Activated CD4-positive, alpha-beta T cell treated with anti-CD3 and anti-CD28 coated beads for 36 hours (primary cell): ENCODE measurements at regions of chr6 and their contacts with region 1.

Region 1: GRCh38 chr6:3118353-3119039 is at the start of gene BPHL:
- DNase-seq: peak; percentile 100
- ATAC-seq: peak; percentile 90
- H3K4me3 Mint-ChIP-seq: peak within 1 kb of the TSS; percentile 76
- H3K27ac Mint-ChIP-seq: peak within 1 kb of the TSS; percentile 60
- H3K4me1 Mint-ChIP-seq: peaks cover 22% of the 10 kb centered on the region
- H3K27me3 Mint-ChIP-seq: no peaks in the 10 kb centered on the region
- total RNA-seq, gene BPHL: 15.8 to 16.7 TPM

Region 2: DNA sequence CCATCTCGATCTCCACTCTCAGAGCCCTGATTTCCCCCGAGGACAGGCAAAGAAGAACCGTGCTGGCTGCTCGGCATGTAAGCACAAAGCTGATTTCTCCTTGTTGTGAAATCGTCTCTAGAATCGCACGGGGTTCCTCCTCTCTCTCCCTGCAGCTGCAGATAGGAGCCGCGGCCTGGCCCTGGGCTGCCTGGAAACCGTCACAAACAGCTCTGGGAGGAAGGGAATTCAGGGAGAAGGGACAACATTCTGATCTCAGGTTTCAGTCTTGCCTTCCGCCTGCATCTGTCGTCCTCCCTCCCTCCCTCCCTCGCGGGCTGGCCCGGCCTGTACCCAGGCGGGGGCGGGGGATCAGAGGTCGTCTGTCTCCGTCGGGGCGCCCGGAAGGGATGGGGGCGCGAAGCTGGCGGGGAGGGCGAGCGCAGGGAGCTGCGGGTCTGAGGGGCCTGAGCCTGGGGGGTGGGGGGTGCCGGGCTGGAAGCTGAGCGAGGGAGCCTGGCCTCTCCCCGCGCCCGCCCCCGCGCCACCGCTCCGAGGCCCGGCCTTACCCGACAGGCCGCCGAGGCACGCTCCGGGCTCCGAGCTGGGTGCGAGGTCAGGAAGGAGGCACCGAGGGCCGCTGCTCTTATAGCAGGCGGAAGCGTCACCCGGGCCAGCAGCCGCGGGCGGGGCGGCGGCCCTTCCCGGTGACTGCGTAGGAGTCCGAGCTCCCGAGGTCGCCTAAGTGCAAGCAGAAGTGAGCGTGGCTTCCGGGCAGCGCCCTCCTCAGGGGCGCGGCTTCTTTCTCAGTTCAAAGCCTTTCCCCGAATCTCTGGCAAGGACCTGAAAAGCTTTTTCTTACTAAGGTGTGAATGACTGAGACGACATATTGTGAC is 277.0 kb before region 1 on chr6 and contains the start of gene SERPINB1:
- CTCF ChIA-PET with region 1: no interaction called
- POLR2A ChIA-PET with region 1: no interaction called
- intact Hi-C with region 1: loop called in 1 of 2 experiments (anchors 1 kb)
- DNase-seq: peak; percentile 96
- ATAC-seq: peak; percentile 86
- H3K4me3 Mint-ChIP-seq: peak within 1 kb of the TSS; percentile 96
- H3K27ac Mint-ChIP-seq: peak within 1 kb of the TSS; percentile 91
- H3K4me1 Mint-ChIP-seq: peaks cover 67% of the 10 kb centered on the region
- H3K27me3 Mint-ChIP-seq: no peaks in the 10 kb centered on the region
- total RNA-seq, gene SERPINB1: 200 to 243 TPM

Region 3: DNA sequence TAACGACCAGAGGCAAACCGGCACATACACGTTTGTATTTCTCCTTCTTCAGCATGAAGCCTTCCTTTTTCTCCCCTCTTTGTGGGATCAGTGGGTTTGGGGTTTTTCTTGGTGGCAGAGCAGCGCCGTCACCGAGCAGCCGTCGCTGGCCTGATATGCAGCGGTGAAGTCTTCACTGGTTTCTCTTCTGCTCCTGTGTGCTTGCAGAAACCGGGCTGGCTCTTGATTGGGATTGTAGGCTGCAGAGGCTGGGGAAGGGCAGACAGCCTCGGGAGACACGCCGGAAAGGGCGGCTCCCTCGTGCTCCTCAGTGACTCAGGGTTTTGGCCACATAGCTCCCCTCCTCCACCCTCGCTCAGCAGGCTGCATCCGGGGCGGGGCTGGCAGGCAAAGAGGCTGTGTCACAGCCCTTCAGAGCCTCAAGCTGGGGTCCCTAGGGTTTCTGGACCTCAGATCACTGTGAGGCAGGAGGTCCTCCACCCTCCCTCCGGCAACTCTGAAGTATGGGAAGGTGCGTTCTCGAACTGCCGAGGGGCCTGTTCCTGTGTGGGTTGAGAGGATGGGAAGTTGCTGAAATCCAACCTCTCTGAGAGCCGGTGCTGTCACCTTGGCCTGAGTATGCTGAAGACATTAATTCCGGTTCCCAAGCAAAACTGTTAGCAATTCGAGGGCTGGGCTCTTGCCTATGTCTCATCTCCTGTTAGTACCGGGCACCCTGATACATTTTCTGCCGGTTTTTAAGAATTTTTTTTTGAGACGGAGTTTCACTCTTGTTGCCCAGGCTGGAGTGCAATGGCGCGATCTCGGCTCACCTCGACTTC is 94.6 kb before region 1 on chr6:
- CTCF ChIA-PET with region 1: no interaction called
- POLR2A ChIA-PET with region 1: no interaction called
- intact Hi-C with region 1: loop called (anchors 1 kb)
- DNase-seq: peak; percentile 95
- ATAC-seq: peak; percentile 86
- H3K4me3 Mint-ChIP-seq: peak overlapping the region; percentile 78
- H3K27ac Mint-ChIP-seq: peak overlapping the region; percentile 95
- H3K4me1 Mint-ChIP-seq: peaks cover 62% of the 10 kb centered on the region
- H3K27me3 Mint-ChIP-seq: no peaks in the 10 kb centered on the region

Region 4: DNA sequence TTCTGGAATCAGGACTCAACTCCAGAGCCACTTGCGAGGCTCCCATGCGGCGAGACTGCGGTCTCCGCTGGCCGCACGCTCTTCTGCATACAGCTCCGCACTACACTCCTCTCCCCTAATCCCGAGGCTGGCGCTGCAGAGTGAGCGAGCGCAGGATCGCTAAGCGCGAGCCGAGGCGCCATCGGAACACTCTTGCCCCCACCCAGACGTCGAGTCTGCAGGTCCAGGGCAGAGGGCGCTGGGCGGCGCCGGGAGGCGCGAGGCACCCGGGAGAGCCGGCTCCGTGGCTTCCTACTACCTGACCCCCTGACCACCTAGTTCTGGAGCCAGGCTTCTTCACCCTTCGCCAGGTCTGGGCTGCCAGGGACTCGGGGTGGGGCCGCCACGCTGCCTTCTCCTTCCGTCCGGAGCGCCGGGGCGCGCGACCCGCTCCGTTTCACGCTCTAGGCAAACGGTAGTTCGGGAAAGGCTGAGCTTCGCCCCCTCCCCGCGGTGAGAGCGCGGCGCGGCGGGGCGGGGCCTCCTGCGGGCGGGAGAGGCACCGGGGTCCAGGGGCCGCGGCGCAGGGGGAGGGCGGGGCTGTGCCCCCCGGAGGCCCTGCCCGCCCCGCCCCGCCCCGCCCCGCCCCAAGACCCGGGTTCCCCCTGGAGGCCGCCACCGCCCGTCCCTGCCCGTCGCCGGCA is 44.2 kb after region 1 on chr6:
- CTCF ChIA-PET with region 1: interaction called, 3 read pairs
- POLR2A ChIA-PET with region 1: no interaction called
- intact Hi-C with region 1: loop called (anchors 1 to 2 kb)
- DNase-seq: peak; percentile 74
- ATAC-seq: peak; percentile 84
- H3K4me3 Mint-ChIP-seq: peak overlapping the region; percentile 66
- H3K27ac Mint-ChIP-seq: peak overlapping the region; percentile 47
- H3K4me1 Mint-ChIP-seq: peaks cover 30% of the 10 kb centered on the region
- H3K27me3 Mint-ChIP-seq: peaks cover 28% of the 10 kb centered on the region

Region 5: GRCh38 chr6:3194535-3195419 is 76.3 kb after region 1 on chr6:
- CTCF ChIA-PET with region 1: no interaction called
- POLR2A ChIA-PET with region 1: no interaction called
- intact Hi-C with region 1: no loop called
- DNase-seq: peak; percentile 50
- ATAC-seq: peak; percentile 68
- H3K4me3 Mint-ChIP-seq: no peak overlapping the region
- H3K27ac Mint-ChIP-seq: no peak overlapping the region
- H3K4me1 Mint-ChIP-seq: no peaks in the 10 kb centered on the region
- H3K27me3 Mint-ChIP-seq: peaks cover 7% of the 10 kb centered on the region

Region 6: DNA sequence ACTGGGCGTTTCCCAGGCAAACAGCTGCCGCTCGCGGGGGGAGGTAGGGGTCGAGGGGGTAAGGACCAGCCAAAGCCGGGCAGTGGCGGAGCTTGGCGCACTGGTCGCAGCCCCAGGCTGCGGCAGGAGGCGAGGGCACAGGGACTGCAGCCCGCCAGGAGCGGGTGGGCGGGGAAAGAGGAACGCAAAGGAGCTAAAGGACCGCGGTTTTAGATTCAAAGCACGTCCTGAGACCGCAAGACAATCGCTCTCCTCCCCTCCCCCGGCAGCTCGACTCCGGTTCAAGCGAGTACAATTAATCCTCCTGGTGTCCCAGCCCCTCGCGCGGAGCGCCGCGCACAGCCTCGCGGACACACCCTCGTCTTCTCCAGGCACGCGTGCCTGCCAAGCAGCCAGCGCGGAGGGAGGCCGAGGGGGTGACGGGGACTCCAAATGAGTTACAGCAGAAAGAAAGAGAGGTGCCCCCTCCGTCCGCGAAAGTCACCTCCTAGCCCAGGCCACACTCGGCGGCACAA is 108.4 kb after region 1 on chr6:
- CTCF ChIA-PET with region 1: no interaction called
- POLR2A ChIA-PET with region 1: no interaction called
- intact Hi-C with region 1: no loop called
- DNase-seq: peak; percentile 47
- ATAC-seq: no peak
- H3K4me3 Mint-ChIP-seq: peak overlapping the region; percentile 51
- H3K27ac Mint-ChIP-seq: no peak overlapping the region
- H3K4me1 Mint-ChIP-seq: peaks cover 41% of the 10 kb centered on the region
- H3K27me3 Mint-ChIP-seq: peaks cover 54% of the 10 kb centered on the region

Region 7: DNA sequence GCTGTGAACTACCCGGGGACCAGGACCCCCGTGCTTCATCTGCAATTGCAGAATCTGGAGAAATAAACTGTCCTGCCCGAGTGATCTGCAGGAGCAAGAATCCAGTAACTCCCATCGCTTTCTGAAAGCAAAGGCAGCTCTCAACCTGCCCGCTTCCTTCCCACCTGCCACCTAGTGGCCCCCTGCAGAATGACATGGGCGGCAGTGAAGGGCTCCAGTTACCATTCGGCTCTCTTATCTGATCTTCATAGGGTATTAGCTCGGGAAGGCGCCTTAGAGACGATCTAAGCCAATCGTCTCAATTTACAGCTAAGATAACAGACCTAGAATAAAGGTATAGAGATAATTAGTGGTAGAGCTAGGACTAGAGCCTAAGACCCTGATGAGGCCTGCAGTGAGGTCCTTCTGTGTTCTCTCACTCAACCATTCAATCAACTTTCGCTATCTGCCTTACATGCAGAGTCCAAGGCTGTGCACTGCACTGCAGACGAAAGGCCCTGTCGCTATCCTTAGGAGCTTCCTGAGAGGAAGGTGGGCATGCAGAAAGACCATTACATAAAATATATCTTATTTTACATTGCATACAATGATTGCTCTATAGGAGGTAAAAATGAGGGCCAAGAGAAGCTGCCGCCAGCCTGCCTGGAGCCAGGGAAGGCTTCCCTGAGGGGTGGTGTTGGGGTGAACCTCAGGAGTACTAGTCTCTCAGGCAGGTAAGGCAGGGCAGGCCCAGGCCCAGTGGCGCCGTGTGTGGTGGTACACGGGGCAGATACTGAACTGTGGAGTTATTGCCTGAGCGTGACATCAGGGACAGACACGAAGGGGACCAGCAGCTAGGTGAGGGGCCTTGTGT is 133.2 kb after region 1 on chr6:
- CTCF ChIA-PET with region 1: interaction called, 6 read pairs
- POLR2A ChIA-PET with region 1: interaction called, 7 read pairs
- intact Hi-C with region 1: loop called in 1 of 2 experiments (anchors 2 kb)
- DNase-seq: peak; percentile 89
- ATAC-seq: peak; percentile 95
- H3K4me3 Mint-ChIP-seq: no peak overlapping the region
- H3K27ac Mint-ChIP-seq: no peak overlapping the region
- H3K4me1 Mint-ChIP-seq: peaks cover 6% of the 10 kb centered on the region
- H3K27me3 Mint-ChIP-seq: peaks cover 29% of the 10 kb centered on the region

Region 8: DNA sequence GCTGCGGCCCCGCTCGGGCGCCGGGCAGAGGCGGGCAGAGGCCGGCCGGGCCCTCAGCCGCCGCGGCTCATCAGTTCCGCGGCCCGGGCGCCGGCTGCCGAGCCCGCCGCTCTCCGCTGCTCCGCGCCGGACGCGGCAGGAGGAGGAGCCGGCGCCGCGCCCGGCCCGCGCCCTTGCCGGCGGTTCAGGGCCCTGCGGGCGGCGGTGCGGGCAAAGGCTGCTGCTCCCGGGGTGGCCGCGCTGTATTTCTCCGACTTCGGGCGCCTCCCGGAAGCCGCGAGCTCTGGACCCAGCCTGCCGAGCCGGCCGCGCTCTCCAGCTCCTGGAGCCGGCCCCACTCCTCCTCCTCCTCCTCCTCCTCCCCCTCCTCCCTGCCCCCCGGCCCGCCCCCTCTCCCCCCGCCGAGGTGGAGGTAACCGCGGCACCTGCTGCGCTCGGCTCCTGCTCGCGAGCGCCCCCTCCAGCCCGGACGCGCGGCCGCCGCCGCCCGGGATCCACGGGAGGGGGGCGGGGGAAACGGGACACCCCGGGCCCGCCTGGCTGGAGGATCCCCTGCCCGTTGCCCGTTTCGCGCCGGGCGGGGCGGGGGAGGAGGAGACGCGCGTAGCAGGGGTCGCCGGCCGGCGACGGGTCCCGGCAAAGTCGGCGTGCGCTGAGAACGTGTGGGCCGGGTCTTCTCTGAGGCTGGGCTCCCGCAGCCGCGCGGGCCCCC is 338.4 kb after region 1 on chr6 and contains the start of gene SLC22A23:
- CTCF ChIA-PET with region 1: no interaction called
- POLR2A ChIA-PET with region 1: no interaction called
- intact Hi-C with region 1: loop called in 1 of 2 experiments (anchors 5 kb)
- DNase-seq: peak; percentile 84
- ATAC-seq: peak; percentile 67
- H3K4me3 Mint-ChIP-seq: peak within 1 kb of the TSS; percentile 70
- H3K27ac Mint-ChIP-seq: peak within 1 kb of the TSS; percentile 47
- H3K4me1 Mint-ChIP-seq: peaks cover 5% of the 10 kb centered on the region
- H3K27me3 Mint-ChIP-seq: peaks cover 23% of the 10 kb centered on the region
- total RNA-seq, gene SLC22A23: 0.37 to 0.39 TPM